Panc1 (cell line): ENCODE measurements at regions of chr17 and their contacts with region 1.

Region 1: GRCh38 chr17:72743037-72743467 is 349.4 kb downstream of the SLC39A11 start:
- DNase-seq: no peak
- ATAC-seq: no peak
- H3K4me3 ChIP-seq: no peak overlapping the region
- H3K27ac ChIP-seq: no peak overlapping the region
- H3K4me1 ChIP-seq: no peaks in the 10 kb centered on the region
- H3K27me3 ChIP-seq: no peaks in the 10 kb centered on the region
- CTCF ChIP-seq: no peak

Region 2: GRCh38 chr17:72502371-72503341 is 240.4 kb before region 1 on chr17:
- CTCF ChIA-PET with region 1: no interaction called
- POLR2A ChIA-PET with region 1: interaction called, 15 read pairs
- in situ Hi-C with region 1: no loop called
- intact Hi-C with region 1: no loop called
- DNase-seq: no peak
- ATAC-seq: peak; percentile 50
- H3K4me3 ChIP-seq: peak overlapping the region; percentile 23 to 51
- H3K27ac ChIP-seq: peak overlapping the region; percentile 98
- H3K4me1 ChIP-seq: peaks cover 80% of the 10 kb centered on the region
- H3K27me3 ChIP-seq: no peaks in the 10 kb centered on the region
- CTCF ChIP-seq: no peak